ENCODE measurements at regions of chr1 and their contacts with region 1.

Region 1: DNA sequence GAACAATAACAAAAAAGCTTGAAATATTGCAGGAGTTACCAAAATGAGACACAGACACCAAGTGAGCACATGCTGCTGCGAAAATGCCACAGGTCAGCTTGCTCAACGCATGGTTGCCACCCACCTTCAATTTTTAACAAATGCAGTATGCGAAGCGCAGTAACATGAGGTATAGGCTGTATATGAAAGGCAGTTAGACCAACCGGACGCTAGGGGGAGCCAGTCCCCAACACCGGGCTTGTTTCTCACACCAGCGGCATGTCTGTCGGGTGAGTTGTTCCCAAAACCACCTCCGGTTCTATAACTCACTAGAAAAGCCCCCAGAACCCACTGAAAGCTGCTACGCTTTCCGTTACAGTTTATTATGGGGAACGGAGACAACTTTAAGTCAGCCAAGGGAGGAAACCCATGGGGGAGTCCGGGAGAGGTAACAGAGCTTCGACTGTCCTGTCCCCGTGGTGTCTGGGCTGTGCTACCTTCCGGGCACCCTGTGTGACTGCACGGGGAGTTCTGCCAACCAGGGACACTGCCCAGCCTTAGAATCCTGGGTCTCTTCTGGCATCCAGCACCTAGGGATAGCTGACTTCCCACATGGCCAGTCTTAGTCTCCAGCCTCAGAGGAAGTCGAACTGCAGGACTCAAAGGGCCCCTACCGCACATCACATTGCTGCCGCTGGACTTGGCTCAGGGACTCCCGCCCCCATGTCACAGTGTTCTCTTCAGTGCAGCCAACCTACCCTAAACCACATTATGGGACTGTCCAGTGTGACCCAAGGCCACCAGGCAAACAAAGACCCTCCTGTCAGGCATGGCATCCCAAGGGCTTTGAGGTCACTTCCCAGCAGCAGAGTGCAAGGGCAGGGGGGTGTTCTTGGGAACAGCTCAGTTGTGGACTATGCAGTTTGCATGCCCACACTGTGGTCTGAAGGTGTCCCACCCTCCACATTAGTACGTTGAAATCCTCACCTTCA is 14.0 kb downstream of the RNF187 start:
- DNase-seq: peak; percentile 75
- H3K27ac ChIP-seq: no peak overlapping the region
- CTCF ChIP-seq: peak; percentile 94

Region 2: GRCh38 chr1:228513236-228513900 is 12.2 kb after region 1 on chr1:
- CTCF ChIA-PET with region 1: interaction called, 16 read pairs
- POLR2A ChIA-PET with region 1: no interaction called
- DNase-seq: no peak
- H3K27ac ChIP-seq: no peak overlapping the region
- CTCF ChIP-seq: no peak

Measured in RWPE1 (cell line).